Activated CD4-positive, alpha-beta memory T cell treated with anti-CD3 and anti-CD28 coated beads for 36 hours (primary cell): ENCODE measurements at regions of chr9 and their contacts with region 1.

Region 1: GRCh38 chr9:19748278-19749126 is 40.3 kb downstream of the SLC24A2 start:
- DNase-seq: no peak
- H3K4me3 Mint-ChIP-seq: no peak overlapping the region
- H3K27ac Mint-ChIP-seq: peak overlapping the region; percentile 28
- H3K4me1 Mint-ChIP-seq: peaks cover 15% of the 10 kb centered on the region
- H3K27me3 Mint-ChIP-seq: no peaks in the 10 kb centered on the region

Region 2: GRCh38 chr9:19471737-19472648 is 276.5 kb before region 1 on chr9:
- CTCF ChIA-PET with region 1: no interaction called
- POLR2A ChIA-PET with region 1: no interaction called
- intact Hi-C with region 1: loop called (anchors 5 kb)
- DNase-seq: peak; percentile 80
- H3K4me3 Mint-ChIP-seq: peak overlapping the region; percentile 42
- H3K27ac Mint-ChIP-seq: no peak overlapping the region
- H3K4me1 Mint-ChIP-seq: peaks cover 16% of the 10 kb centered on the region
- H3K27me3 Mint-ChIP-seq: peaks cover 6% of the 10 kb centered on the region

Region 3: GRCh38 chr9:19577411-19577810 is 171.1 kb before region 1 on chr9:
- CTCF ChIA-PET with region 1: no interaction called
- POLR2A ChIA-PET with region 1: no interaction called
- intact Hi-C with region 1: no loop called
- DNase-seq: no peak
- H3K4me3 Mint-ChIP-seq: no peak overlapping the region
- H3K27ac Mint-ChIP-seq: no peak overlapping the region
- H3K4me1 Mint-ChIP-seq: no peaks in the 10 kb centered on the region
- H3K27me3 Mint-ChIP-seq: peaks cover 6% of the 10 kb centered on the region

Region 4: DNA sequence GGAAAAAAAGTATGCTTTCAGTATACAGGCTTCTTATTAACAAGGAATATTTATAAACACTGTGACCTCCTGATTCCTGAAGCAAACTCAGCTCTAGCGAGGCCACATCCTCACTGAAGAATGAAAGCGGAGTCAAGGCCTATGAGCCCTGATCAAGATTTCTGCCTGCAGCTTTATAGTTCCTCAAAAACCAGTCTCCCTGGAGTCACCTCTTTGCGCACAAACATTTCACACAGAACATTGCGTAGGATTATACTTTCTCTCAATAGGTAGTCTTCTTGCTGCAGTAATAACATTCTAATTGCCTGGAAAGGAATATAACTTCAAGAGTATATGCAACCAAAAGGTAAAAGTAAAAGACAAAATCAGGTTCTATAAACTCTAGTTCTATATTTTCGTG is 22.5 kb before region 1 on chr9:
- CTCF ChIA-PET with region 1: no interaction called
- POLR2A ChIA-PET with region 1: no interaction called
- intact Hi-C with region 1: no loop called
- DNase-seq: no peak
- H3K4me3 Mint-ChIP-seq: no peak overlapping the region
- H3K27ac Mint-ChIP-seq: no peak overlapping the region
- H3K4me1 Mint-ChIP-seq: no peaks in the 10 kb centered on the region
- H3K27me3 Mint-ChIP-seq: no peaks in the 10 kb centered on the region

Region 5: GRCh38 chr9:19788614-19789271 is 40.2 kb after region 1 on chr9 and contains the start of gene SLC24A2:
- CTCF ChIA-PET with region 1: no interaction called
- POLR2A ChIA-PET with region 1: no interaction called
- intact Hi-C with region 1: no loop called
- DNase-seq: no peak
- H3K4me3 Mint-ChIP-seq: no peak within 1 kb of the TSS
- H3K27ac Mint-ChIP-seq: no peak within 1 kb of the TSS
- H3K4me1 Mint-ChIP-seq: no peaks in the 10 kb centered on the region
- H3K27me3 Mint-ChIP-seq: peaks cover 22% of the 10 kb centered on the region
- total RNA-seq, gene SLC24A2: not detected